IMR-90 (cell line): ENCODE measurements at regions of chr3 and their contacts with region 1.

Region 1: DNA sequence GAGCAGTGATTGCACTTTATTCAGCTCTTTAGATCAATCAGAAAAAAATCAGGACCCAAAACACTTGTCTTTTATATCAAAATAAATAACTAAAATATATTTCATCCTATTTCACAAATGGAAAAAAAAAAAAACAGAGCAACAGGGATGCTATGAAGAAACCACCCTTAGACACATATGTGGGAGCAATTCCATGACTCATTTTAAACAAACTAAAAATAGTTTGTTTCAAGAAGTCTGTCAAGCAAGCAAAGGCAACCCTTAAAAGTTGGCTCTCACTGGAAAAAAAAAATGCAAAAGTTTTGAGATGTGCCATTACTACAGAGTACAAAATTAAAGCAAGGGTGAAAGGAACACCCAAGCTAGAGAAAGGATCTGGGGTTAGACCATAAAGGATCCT is 5.7 kb downstream of the ATP13A3 start:
- DNase-seq: peak; percentile 86
- ATAC-seq: 0 out of 2 replicates have a peak, but pooled peaks have one; percentile 9
- H3K4me3 ChIP-seq: no peak overlapping the region
- H3K27ac ChIP-seq: peak overlapping the region; percentile 29; the same call in 1 of the 2 replicates
- H3K4me1 ChIP-seq: peaks cover 21% of the 10 kb centered on the region
- H3K27me3 ChIP-seq: no peaks in the 10 kb centered on the region
- CTCF ChIP-seq: no peak
- POLR2A ChIP-seq: no peak
- RAD21 ChIP-seq: no peak

Region 2: DNA sequence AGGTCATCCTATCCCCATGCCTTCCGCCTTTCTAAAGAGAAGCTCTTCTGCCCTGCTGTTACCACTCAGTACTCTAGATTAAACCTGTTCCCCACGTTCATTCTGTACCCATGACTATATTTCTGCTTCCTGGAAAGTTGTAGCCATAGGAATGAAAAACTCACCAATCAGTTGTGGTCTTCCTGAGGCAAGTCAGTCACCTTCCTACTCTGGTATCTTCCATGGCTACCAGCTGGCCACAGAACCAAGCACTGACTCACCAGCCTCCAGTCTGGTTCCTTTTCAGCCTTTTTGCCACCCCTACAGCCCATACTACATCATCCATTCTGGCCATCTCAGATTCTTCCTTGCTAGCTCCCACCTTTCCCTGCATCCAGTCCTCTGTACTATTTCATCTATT is 105.7 kb after region 1 on chr3:
- CTCF ChIA-PET with region 1: no interaction called
- POLR2A ChIA-PET with region 1: no interaction called
- dilution Hi-C with region 1: no loop called
- in situ Hi-C with region 1: loop called (anchors 5 kb)
- intact Hi-C with region 1: no loop called
- DNase-seq: peak; percentile 84
- ATAC-seq: no peak
- H3K4me3 ChIP-seq: no peak overlapping the region
- H3K27ac ChIP-seq: peak overlapping the region; percentile 10; the same call in 1 of the 2 replicates
- H3K4me1 ChIP-seq: no peaks in the 10 kb centered on the region; the same call in 1 of the 2 replicates
- H3K27me3 ChIP-seq: no peaks in the 10 kb centered on the region
- CTCF ChIP-seq: no peak
- POLR2A ChIP-seq: no peak; the same call in 1 of the 2 replicates
- RAD21 ChIP-seq: no peak